Left ventricle myocardium inferior (tissue), 1 donor: ENCODE measurements at regions of chrX and their contacts with region 1.

Region 1: DNA sequence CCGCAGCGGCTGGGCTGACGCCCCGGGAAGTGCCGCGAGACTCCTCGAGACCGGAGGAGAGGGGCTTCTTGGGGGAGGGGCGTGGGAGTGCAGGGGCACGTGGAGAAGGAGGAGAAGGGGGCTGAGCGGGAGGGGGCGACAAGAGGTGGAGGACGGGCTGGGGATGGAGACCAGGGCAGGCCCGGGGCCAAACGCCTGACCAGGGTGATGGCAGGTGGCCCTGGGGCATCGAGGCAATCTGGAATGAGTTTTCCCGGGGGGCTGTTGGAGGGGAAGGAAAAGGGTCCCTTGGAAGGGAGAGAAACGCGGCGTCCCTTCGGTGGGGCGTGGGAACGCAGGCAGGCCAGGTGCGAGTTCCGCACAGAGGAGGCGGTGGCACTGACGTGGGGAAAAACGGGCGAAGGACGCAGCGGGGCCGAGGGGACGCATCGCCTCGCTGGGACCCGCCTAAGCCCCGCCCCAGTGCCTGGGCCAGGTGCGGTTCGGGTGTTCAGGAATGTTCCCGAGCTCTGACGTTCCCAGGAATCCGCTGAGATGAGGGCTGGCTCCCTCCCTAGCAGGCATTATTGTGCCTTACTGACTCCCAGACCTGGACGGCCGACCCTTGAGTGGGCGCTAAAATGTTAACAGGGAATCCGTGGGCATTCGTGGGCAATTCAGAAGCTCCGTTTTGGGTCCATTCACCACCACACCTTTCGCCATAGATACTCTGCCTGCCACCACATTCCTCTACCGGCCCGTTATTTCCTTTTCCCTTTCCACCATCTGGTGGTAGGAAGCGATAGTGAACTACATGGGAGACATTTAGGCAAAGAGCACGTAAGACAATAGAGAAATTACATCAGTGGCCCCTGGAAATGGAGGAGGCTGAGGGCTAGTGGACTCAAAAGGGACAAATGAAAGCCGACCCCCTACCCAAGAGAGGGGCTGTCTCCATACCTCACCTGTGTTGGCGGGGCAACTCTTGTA is 795 bp upstream of the SH3KBP1 start:
- DNase-seq: peak; percentile 15
- H3K4me3 ChIP-seq: peak overlapping the region; percentile 81
- H3K27ac ChIP-seq: peak overlapping the region; percentile 72
- H3K4me1 ChIP-seq: peaks cover 17% of the 10 kb centered on the region
- H3K27me3 ChIP-seq: no peaks in the 10 kb centered on the region
- CTCF ChIP-seq: peak; percentile 65

Region 2: GRCh38 chrX:19403696-19404095 is 484.5 kb before region 1 on chrX:
- intact Hi-C with region 1: no loop called
- DNase-seq: no peak
- H3K4me3 ChIP-seq: no peak overlapping the region
- H3K27ac ChIP-seq: no peak overlapping the region
- H3K4me1 ChIP-seq: no peaks in the 10 kb centered on the region
- H3K27me3 ChIP-seq: no peaks in the 10 kb centered on the region
- CTCF ChIP-seq: no peak

Region 3: DNA sequence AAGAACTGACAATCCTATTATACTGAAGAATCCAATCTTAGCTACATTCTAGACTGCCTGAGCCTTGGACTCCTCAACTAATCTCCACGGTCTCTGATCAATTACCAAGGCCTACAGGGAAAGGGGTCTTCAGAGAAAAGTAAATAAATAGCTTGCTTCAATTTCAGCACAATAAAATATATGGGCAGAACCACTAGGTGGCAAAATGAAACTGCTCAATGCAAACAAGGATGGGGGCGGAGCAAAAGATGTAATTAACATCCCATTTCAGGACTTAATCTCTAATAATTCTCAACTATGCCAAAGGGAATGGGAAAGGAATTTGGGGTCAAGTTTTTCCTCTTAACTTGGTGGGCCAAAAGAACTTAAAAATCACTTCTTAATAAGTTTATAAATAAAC is 294.5 kb before region 1 on chrX:
- intact Hi-C with region 1: loop called (anchors 10 kb)
- DNase-seq: no peak
- H3K4me3 ChIP-seq: no peak overlapping the region
- H3K27ac ChIP-seq: no peak overlapping the region
- H3K4me1 ChIP-seq: peaks cover 22% of the 10 kb centered on the region
- H3K27me3 ChIP-seq: no peaks in the 10 kb centered on the region
- CTCF ChIP-seq: peak; percentile 61

Region 4: DNA sequence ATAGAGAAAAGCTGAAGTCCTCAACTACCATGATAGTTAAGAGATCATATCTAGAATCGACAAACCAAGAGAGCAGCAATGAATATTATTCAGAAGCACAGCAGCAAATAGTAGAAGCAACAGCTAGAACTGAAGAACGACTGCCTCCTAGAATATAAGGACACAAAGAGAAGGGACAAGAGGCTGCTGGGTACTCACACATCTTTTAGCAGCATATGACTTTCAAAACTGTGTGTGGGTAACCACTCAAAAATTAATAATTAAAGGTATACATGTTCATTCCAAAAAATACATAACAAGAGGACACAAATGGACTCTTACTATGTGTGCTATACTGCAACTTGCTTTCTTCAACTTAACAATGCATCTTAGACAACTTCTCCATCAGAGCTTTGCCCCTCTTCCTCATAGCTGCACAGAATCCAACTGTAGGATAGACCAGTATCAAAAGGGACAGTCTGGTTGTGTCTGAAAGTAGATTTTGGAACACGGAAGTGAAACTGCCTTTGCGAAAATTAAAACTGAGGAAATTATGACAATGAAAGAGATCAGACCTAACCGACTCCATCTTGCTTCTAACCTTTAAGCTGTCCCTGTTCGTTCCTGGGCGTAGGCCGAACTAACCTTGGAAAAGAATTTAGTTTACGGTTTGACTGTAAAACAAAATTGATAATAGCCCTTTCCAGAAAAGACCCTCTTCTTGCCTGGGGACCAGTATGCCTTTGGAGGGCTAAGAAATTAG is 126.5 kb before region 1 on chrX:
- intact Hi-C with region 1: no loop called
- DNase-seq: no peak
- H3K4me3 ChIP-seq: no peak overlapping the region
- H3K27ac ChIP-seq: no peak overlapping the region
- H3K4me1 ChIP-seq: peaks cover 4% of the 10 kb centered on the region
- H3K27me3 ChIP-seq: no peaks in the 10 kb centered on the region
- CTCF ChIP-seq: no peak